Caco-2 (cell line): ENCODE measurements at regions of chr5 and their contacts with region 1.

Region 1: DNA sequence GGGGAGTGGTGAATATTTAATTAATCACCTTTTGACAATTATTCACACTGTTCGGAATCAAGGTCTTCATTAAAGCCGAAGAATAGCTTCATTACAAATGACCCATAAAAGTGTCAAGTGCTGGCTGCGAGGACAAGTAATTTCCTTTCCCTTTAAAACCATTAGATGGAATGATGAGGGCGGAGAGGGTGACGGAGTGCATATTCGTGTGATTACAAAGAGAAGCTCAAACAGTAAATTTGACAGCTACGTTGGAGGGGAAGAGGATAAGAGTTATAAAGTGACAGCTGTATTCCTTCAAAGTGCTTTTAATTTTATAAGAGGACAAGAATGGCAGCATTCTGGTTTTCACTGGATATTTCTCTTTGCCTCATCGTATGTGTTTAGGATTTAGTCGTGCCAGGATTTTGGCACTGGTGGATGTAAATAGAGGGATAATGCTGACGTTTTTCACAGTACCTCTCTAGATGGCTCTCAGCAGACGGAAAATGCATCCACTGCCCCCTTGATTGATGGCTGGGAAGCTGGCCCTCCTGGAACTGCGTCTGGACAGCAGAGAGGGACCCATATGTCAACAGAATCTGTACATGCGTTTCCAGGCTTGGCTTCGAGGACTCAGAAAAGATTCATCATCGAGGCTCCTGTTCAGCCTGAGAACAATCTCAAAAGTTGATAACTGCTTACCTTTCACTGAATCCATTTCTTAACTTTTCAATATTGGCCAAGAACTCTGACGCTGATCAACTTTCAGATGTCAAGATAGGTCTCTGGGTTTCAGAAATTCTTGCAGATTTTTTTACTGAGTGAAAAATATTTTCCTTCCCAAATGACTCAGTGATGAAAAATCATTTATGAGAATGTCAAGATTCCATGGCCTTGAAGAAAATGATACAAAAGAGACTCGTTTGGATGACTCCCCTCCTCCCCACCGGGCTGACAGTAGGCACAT is 50.4 kb upstream of the IRX2 start:
- DNase-seq: no peak
- H3K4me3 ChIP-seq: no peak overlapping the region
- H3K4me3 Mint-ChIP-seq: peak overlapping the region; percentile 39
- H3K27ac Mint-ChIP-seq: peak overlapping the region; percentile 24
- H3K4me1 ChIP-seq: peaks cover 27% of the 10 kb centered on the region
- H3K4me1 Mint-ChIP-seq: peaks cover 15% of the 10 kb centered on the region
- H3K27me3 ChIP-seq: no peaks in the 10 kb centered on the region
- H3K27me3 Mint-ChIP-seq: no peaks in the 10 kb centered on the region
- CTCF ChIP-seq: no peak

Region 2: GRCh38 chr5:2817031-2817603 is 15.3 kb after region 1 on chr5:
- CTCF ChIA-PET with region 1: no interaction called
- POLR2A ChIA-PET with region 1: no interaction called
- intact Hi-C with region 1: no loop called
- DNase-seq: no peak
- H3K4me3 ChIP-seq: no peak overlapping the region
- H3K4me3 Mint-ChIP-seq: no peak overlapping the region
- H3K27ac Mint-ChIP-seq: no peak overlapping the region
- H3K4me1 ChIP-seq: no peaks in the 10 kb centered on the region
- H3K4me1 Mint-ChIP-seq: no peaks in the 10 kb centered on the region
- H3K27me3 ChIP-seq: no peaks in the 10 kb centered on the region
- H3K27me3 Mint-ChIP-seq: no peaks in the 10 kb centered on the region
- CTCF ChIP-seq: no peak

Region 3: DNA sequence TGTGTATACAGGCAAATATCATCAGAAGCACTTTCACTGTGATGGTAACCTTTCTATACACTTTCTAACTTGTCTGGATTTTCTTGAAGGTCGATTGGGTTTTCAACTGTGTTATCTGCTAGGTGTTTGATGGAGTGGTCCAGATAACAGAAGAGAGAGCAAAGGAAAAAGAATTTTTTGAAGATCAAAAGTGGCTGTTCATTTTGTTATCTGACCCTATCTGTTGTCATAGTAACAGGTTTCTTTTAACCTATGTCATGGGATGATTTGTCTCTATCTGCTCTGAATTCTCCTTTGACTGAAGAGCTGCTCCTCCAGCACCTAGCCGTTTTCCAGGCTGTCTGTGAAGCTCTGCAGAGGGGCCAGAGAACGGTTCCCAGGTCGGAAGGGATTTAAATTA is 27.4 kb after region 1 on chr5:
- CTCF ChIA-PET with region 1: no interaction called
- POLR2A ChIA-PET with region 1: no interaction called
- intact Hi-C with region 1: loop called (anchors 1 kb)
- DNase-seq: peak in 1 of 2 experiments; percentile 31
- H3K4me3 ChIP-seq: no peak overlapping the region
- H3K4me3 Mint-ChIP-seq: peak overlapping the region; percentile 51
- H3K27ac Mint-ChIP-seq: peak overlapping the region; percentile 86
- H3K4me1 ChIP-seq: peaks cover 18% of the 10 kb centered on the region
- H3K4me1 Mint-ChIP-seq: peaks cover 13% of the 10 kb centered on the region
- H3K27me3 ChIP-seq: no peaks in the 10 kb centered on the region
- H3K27me3 Mint-ChIP-seq: no peaks in the 10 kb centered on the region
- CTCF ChIP-seq: no peak